BJ (cell line): ENCODE measurements at regions of chr22 and their contacts with region 1.

Region 1: GRCh38 chr22:45863981-45864751 is 112.8 kb downstream of the WNT7B start:
- DNase-seq: no peak
- H3K4me3 ChIP-seq: no peak overlapping the region
- H3K27me3 ChIP-seq: peaks cover 11% of the 10 kb centered on the region
- CTCF ChIP-seq: peak; percentile 90

Region 2: DNA sequence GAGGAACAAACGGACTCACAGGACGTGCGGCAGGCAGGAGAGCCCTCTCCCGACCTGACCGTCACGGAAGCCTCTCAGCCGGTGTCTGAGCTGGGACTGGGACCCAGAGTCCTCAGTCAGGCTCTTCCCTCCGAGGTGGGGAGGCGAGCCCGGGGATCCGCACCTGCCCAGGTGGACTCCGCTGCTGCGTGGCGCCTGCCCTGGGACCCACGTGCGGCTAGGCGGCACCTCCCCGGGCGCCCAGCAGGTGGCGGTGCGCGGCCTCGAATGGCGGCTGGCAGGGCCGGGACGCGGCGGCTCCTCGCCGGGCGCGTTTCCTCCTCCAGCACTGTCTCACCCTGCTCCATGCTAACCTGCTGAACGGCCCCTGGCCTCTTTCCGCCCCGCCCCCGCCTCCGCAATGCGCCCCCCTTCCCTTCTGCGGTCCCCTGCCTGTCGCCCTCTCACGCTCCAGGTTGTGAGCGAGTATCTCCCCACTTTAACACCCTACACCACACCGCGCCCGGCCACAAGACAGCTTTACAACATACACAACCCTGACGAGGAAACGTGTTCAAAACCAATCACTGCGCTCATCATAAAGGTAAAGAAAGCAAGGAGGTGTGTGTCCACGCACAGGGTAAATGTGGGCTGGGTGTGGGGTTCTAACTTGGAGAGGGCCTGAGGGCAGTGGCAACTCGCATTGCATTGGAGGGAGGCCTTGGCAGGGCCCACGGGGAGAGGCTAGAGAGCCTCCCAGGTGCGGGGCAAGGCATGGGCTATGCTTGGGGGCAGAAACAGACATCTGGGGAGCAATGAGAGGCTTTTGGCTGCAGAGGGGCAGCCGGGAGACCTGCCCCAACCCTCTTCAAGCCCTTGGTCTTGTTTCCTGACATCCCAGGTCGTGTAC is 218.4 kb before region 1 on chr22:
- CTCF ChIA-PET with region 1: interaction called, 34 read pairs
- POLR2A ChIA-PET with region 1: no interaction called
- DNase-seq: no peak
- H3K4me3 ChIP-seq: peak overlapping the region; percentile 21
- H3K27me3 ChIP-seq: peaks cover 11% of the 10 kb centered on the region; the same call in 1 of the 2 replicates
- CTCF ChIP-seq: peak; percentile 55

Region 3: GRCh38 chr22:45845076-45845487 is 19.1 kb before region 1 on chr22:
- CTCF ChIA-PET with region 1: interaction called, 16 read pairs
- POLR2A ChIA-PET with region 1: no interaction called
- DNase-seq: no peak
- H3K4me3 ChIP-seq: no peak overlapping the region
- H3K27me3 ChIP-seq: no peaks in the 10 kb centered on the region
- CTCF ChIP-seq: no peak

Region 4: DNA sequence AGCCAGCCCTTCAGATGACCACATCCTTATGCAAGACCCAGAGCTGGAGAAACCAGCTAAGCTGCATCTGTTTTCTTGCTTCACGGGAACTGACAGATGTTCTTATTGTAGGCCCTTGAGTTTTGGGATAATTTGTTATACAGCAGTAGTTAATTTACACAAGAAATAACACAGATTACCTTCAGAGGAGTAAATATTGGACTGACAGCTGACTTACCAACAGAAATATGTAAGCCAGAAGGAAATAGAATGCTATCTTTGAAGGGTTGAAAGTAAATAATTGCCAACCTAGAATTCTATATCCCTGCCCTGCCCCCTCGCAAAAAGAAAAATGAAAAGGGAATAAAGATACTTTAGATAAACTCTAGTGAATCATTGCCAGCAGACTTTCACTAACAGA is 11.3 kb before region 1 on chr22:
- CTCF ChIA-PET with region 1: interaction called, 24 read pairs
- POLR2A ChIA-PET with region 1: no interaction called
- DNase-seq: no peak
- H3K4me3 ChIP-seq: no peak overlapping the region
- H3K27me3 ChIP-seq: no peaks in the 10 kb centered on the region
- CTCF ChIP-seq: no peak

Region 5: DNA sequence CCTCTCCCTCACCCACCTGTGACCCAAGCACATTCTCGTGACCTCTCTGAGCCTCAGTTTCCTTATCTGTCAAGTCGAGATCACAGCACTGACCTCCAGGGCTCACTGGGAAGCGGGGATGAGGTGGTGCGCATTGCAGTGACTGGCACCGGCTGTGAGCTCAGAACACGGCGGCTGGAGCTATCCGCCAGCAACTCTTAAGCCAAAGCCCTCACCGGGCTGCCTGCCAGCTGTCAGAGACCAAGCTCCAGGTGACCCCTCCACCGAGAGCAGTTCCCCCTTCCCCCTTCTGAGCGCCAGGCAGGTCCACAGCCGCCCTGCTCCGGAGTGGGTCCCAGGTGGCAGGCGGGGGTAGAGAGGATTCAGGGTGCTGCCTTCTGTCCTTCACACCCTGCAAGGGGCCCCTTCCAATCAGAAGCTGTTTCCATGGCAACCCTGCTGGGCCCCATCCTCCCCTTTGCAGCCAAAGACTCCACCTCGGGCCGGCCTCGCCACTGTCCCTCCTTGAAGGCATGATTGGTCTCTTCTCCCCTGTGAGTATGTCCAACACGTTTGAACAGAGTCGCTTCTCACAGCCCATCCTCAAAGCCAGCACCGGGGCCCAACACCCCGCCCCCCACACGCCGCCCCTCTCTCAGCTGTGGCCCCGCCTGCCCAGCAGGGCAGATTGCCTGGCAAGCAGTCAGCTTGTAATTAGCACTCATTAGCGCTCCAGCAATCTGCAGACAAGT is 14.1 kb after region 1 on chr22:
- CTCF ChIA-PET with region 1: interaction called, 13 read pairs
- POLR2A ChIA-PET with region 1: no interaction called
- DNase-seq: no peak
- H3K4me3 ChIP-seq: no peak overlapping the region
- H3K27me3 ChIP-seq: peaks cover 35% of the 10 kb centered on the region
- CTCF ChIP-seq: no peak